ENCODE measurements at regions of chr7 and their contacts with region 1.

Region 1: DNA sequence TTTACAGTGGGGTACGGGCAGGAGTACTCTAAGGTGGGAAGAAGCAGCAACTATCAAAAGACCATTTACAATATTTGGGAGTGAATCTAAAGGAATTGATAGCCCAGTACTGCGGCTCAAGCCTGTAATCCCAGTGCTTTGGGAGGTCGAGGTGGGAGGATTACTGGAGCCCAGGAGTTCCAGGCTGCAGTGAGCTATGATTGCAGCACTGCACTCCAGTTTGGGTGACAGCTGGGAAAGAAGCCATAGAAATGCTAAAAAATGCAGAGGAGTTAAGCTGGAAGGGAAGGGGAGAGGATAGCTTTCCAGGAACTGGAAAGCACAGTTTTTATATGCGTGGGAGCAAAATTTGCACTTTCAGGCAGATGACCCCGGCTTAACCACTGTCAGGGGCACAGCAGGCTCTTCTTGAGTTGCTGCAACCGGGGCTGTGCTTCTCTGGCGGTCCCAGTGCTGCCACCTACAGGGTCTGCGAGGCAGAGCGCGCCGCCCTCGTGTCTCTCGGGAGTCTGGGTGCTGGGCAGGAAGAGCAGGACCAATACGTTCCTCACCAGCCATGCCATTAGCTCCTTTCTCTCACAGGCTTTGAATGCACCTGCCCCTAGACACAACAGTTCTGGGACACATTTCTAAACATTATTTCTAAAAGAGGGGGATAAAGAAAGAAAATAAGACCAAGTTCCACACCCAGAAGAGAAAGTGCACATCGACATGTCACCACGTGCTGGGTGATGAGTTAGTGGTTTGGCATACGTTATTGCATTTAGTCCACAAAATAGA is 10.1 kb upstream of the BMPER start:
- DNase-seq: peak; percentile 92
- H3K4me3 ChIP-seq: no peak overlapping the region
- H3K27ac ChIP-seq: no peak overlapping the region
- H3K4me1 ChIP-seq: peaks cover 4 to 9% (median 7%) of the 10 kb centered on the region in 4 donors
- H3K27me3 ChIP-seq: no peaks in the 10 kb centered on the region
- CTCF ChIP-seq: peak; percentile 74 to 98 (median 84)
- EP300 ChIP-seq: no peak
- POLR2A ChIP-seq: no peak

Region 2: DNA sequence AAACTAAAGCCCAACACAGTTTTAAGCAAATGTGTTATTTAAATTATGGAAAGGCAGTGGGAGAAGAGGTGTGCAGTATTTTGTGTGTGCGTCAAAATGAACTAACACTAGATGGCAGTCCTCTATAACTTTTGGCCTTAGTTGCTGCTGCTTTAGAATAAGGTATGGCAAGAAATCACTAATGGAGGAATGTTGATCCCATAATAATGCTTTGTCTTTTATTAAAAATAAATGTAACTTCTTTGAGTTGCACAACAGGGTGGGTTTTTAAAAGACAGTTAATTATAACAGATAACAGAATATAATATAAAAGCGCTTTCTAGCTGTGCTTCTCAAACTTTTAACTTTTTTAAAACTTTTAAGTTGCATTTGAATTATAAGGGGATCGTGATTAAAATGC is 709.4 kb before region 1 on chr7:
- intact Hi-C with region 1: loop called (anchors 10 kb)
- DNase-seq: no peak
- H3K4me3 ChIP-seq: no peak overlapping the region
- H3K27ac ChIP-seq: no peak overlapping the region
- H3K4me1 ChIP-seq: peaks cover 0 to 10% (median 6%) of the 10 kb centered on the region in 4 donors
- H3K27me3 ChIP-seq: no peaks in the 10 kb centered on the region
- CTCF ChIP-seq: peak; percentile 44 to 60 (median 47)
- EP300 ChIP-seq: no peak
- POLR2A ChIP-seq: no peak

Region 3: GRCh38 chr7:33243319-33243881 is 651.8 kb before region 1 on chr7:
- intact Hi-C with region 1: loop called (anchors 10 kb)
- DNase-seq: no peak
- H3K4me3 ChIP-seq: no peak overlapping the region
- H3K27ac ChIP-seq: no peak overlapping the region
- H3K4me1 ChIP-seq: peaks cover 0 to 5% (median 0%) of the 10 kb centered on the region in 4 donors
- H3K27me3 ChIP-seq: no peaks in the 10 kb centered on the region
- CTCF ChIP-seq: peak; percentile 50 to 68 (median 65)
- EP300 ChIP-seq: no peak
- POLR2A ChIP-seq: no peak

Region 4: GRCh38 chr7:33757562-33758165 is 137.6 kb before region 1 on chr7:
- intact Hi-C with region 1: loop called (anchors 2 kb)
- DNase-seq: no peak
- H3K4me3 ChIP-seq: no peak overlapping the region
- H3K27ac ChIP-seq: no peak overlapping the region
- H3K4me1 ChIP-seq: peaks cover 0 to 7% (median 3%) of the 10 kb centered on the region in 4 donors
- H3K27me3 ChIP-seq: no peaks in the 10 kb centered on the region
- CTCF ChIP-seq: peak; percentile 40 to 63 (median 62)
- EP300 ChIP-seq: no peak
- POLR2A ChIP-seq: no peak

Region 5: GRCh38 chr7:34211033-34211432 is 315.8 kb after region 1 on chr7:
- intact Hi-C with region 1: no loop called
- DNase-seq: no peak
- H3K4me3 ChIP-seq: no peak overlapping the region
- H3K27ac ChIP-seq: no peak overlapping the region
- H3K4me1 ChIP-seq: peaks cover 0 to 9% (median 0%) of the 10 kb centered on the region in 4 donors
- H3K27me3 ChIP-seq: no peaks in the 10 kb centered on the region
- CTCF ChIP-seq: no peak
- EP300 ChIP-seq: no peak
- POLR2A ChIP-seq: no peak

Measured in esophagus muscularis mucosa (tissue), 4 donors.